Sciatic nerve (tissue), 2 donors: ENCODE measurements at regions of chr7 and their contacts with region 1.

Region 1: DNA sequence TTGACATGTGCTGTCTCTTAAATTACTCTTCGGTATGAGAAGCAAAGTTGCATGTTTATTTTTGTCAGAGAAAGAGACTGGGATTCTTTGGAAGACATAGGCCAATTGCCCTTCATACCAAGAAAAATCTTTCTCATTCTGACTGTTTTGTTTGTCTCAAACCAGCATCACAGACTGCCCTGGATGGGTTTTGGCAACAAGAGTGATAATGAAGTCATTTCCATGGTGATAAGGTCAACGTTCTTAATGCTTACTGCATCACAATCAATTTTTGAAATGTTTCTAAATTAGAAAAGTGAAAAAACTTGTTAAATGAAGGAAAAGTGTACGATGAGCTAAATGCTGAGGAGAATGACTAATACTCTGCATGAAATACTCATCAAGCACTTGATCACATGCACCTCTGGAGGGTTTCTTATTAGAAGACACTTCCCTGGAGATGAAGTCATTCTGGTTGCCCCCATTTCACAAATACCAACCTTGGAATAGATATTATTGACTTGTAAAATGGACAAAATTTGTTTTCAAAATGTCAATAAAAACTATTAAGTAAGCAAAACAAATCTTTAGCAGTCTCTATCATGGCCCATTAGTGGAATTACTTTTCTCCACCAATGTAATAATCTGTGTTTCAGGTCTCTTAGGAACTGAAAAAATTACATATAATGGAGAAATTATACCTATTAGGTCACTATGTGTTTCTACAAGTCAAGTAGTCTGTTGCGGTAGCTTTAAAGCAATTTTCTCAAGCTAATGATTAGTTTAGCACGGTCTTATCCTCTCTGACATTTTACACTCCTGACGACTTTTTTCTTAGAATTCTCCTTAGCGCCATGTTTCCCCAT is 19.9 kb upstream of the SEC61G start:
- DNase-seq: no peak
- ATAC-seq: no peak

Region 2: GRCh38 chr7:54926674-54927360 is 147.9 kb after region 1 on chr7:
- intact Hi-C with region 1: no loop called
- DNase-seq: no peak
- ATAC-seq: no peak

Region 3: GRCh38 chr7:55255496-55256435 is 476.8 kb after region 1 on chr7:
- intact Hi-C with region 1: loop called (anchors 5 kb)
- DNase-seq: peak; percentile 89
- ATAC-seq: peak; percentile 89